PC-9 (cell line): ENCODE measurements at regions of chr4 and their contacts with region 1.

Region 1: GRCh38 chr4:105182211-105182610 is 35.5 kb downstream of the TET2 start:
- DNase-seq: no peak
- H3K4me3 ChIP-seq: no peak overlapping the region
- H3K27ac ChIP-seq: no peak overlapping the region
- H3K4me1 ChIP-seq: no peaks in the 10 kb centered on the region
- H3K27me3 ChIP-seq: no peaks in the 10 kb centered on the region
- CTCF ChIP-seq: no peak

Region 2: DNA sequence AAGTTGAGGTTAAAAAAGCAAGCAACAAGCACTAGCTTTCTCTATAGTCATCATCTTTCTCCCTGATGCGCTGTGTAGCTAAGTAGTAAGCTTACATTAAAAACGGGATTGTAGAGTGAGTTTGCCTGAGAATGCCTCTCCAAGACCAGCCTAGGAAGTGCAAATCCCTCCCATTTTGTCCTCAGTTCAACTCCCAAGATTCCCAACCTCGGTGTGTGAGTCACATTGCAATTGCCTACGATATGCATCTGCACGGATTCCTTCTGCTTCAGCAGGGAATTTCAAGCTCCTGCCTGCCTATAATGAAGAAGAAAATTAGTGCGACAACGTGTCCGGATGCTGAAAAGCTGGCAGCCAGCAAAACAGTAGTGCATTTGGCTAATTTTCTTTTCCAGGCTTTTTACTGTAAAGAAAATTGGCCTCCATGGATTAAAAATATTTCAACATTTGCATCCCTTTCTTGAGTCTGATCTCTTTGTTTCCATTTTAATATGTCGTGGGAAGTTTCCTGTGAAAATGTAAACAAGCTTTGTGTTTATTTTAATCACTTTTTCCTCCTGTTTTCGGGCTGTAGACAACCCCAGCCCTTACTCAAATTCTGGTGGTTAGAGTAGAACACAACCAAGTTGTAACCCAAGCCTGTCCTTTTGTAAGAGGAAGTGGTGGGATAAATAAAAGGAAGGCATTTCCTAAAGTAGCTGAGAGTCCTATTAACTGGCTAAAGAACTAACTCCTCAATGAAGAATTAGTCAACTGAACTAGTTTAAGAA is 93.9 kb before region 1 on chr4:
- CTCF ChIA-PET with region 1: no interaction called
- POLR2A ChIA-PET with region 1: no interaction called
- intact Hi-C with region 1: no loop called
- DNase-seq: peak in 1 of 2 experiments; percentile 22
- H3K4me3 ChIP-seq: no peak overlapping the region
- H3K27ac ChIP-seq: no peak overlapping the region
- H3K4me1 ChIP-seq: no peaks in the 10 kb centered on the region
- H3K27me3 ChIP-seq: no peaks in the 10 kb centered on the region; the same call in 1 of the 2 replicates
- CTCF ChIP-seq: no peak

Region 3: GRCh38 chr4:105162123-105162796 is 20.0 kb before region 1 on chr4:
- CTCF ChIA-PET with region 1: no interaction called
- POLR2A ChIA-PET with region 1: interaction called, 13 read pairs
- intact Hi-C with region 1: no loop called
- DNase-seq: no peak
- H3K4me3 ChIP-seq: no peak overlapping the region
- H3K27ac ChIP-seq: no peak overlapping the region
- H3K4me1 ChIP-seq: no peaks in the 10 kb centered on the region
- H3K27me3 ChIP-seq: no peaks in the 10 kb centered on the region
- CTCF ChIP-seq: no peak

Region 4: GRCh38 chr4:105257826-105258495 is 75.8 kb after region 1 on chr4:
- CTCF ChIA-PET with region 1: no interaction called
- POLR2A ChIA-PET with region 1: no interaction called
- intact Hi-C with region 1: no loop called
- DNase-seq: no peak
- H3K4me3 ChIP-seq: no peak overlapping the region
- H3K27ac ChIP-seq: no peak overlapping the region
- H3K4me1 ChIP-seq: no peaks in the 10 kb centered on the region
- H3K27me3 ChIP-seq: no peaks in the 10 kb centered on the region
- CTCF ChIP-seq: no peak